ENCODE measurements at regions of chr3 and their contacts with region 1.

Region 1: DNA sequence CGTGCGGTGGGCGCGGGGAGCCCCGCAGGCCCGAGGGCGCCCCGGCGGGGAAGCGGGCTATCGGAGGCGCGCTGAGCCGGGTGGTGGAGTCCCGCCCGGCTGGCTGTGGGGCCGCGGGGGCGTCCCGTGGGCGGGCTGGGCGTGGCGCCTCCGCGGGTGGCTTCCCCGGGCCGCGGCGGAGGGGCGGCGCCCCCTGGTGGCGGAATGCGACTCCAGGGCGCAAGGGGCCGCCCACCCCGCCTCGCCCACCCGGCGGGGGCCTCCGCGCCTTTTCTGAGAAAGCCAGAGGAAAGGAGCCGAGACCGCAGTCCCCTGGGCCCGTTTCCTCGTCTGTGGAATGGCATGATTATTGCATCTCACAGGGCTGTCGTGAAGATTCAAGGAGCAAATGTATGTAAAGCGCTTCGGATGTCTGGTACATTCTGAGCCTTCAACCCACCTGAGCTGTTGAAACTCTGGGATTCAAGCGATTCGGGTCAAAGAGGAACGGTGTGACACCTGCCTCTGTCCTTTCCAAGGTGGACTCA is 31.9 kb upstream of the RAB6B start:
- DNase-seq: no peak
- H3K4me3 Mint-ChIP-seq: no peak overlapping the region
- H3K27ac Mint-ChIP-seq: no peak overlapping the region
- H3K4me1 Mint-ChIP-seq: peaks cover 13% of the 10 kb centered on the region
- H3K27me3 Mint-ChIP-seq: peaks cover 21% of the 10 kb centered on the region
- CTCF ChIP-seq: peak; percentile 71

Region 2: GRCh38 chr3:133661454-133662277 is 265.9 kb before region 1 on chr3 and contains the start of gene TOPBP1:
- CTCF ChIA-PET with region 1: interaction called, 6 read pairs
- POLR2A ChIA-PET with region 1: no interaction called
- intact Hi-C with region 1: loop called (anchors 5 kb)
- DNase-seq: peak; percentile 74
- H3K4me3 Mint-ChIP-seq: peak within 1 kb of the TSS; percentile 94
- H3K27ac Mint-ChIP-seq: peak within 1 kb of the TSS; percentile 91
- H3K4me1 Mint-ChIP-seq: peaks cover 22% of the 10 kb centered on the region
- H3K27me3 Mint-ChIP-seq: no peaks in the 10 kb centered on the region
- CTCF ChIP-seq: no peak
- total RNA-seq, gene TOPBP1: 27.4 and 27.7 TPM in 2 replicates

Region 3: GRCh38 chr3:133821767-133822638 is 105.6 kb before region 1 on chr3:
- CTCF ChIA-PET with region 1: interaction called, 18 read pairs
- POLR2A ChIA-PET with region 1: no interaction called
- intact Hi-C with region 1: loop called (anchors 2 kb)
- DNase-seq: peak; percentile 93
- H3K4me3 Mint-ChIP-seq: no peak overlapping the region
- H3K27ac Mint-ChIP-seq: no peak overlapping the region
- H3K4me1 Mint-ChIP-seq: peaks cover 13% of the 10 kb centered on the region
- H3K27me3 Mint-ChIP-seq: no peaks in the 10 kb centered on the region
- CTCF ChIP-seq: peak; percentile 26

Region 4: GRCh38 chr3:134039161-134039862 is 111.7 kb after region 1 on chr3:
- CTCF ChIA-PET with region 1: interaction called, 3 read pairs
- POLR2A ChIA-PET with region 1: no interaction called
- intact Hi-C with region 1: loop called (anchors 1 kb)
- DNase-seq: peak; percentile 52
- H3K4me3 Mint-ChIP-seq: no peak overlapping the region
- H3K27ac Mint-ChIP-seq: peak overlapping the region; percentile 46
- H3K4me1 Mint-ChIP-seq: peaks cover 13% of the 10 kb centered on the region
- H3K27me3 Mint-ChIP-seq: no peaks in the 10 kb centered on the region
- CTCF ChIP-seq: no peak

Region 5: GRCh38 chr3:134059671-134060560 is 132.3 kb after region 1 on chr3:
- CTCF ChIA-PET with region 1: interaction called, 57 read pairs
- POLR2A ChIA-PET with region 1: no interaction called
- intact Hi-C with region 1: loop called (anchors 1 kb)
- DNase-seq: peak; percentile 27
- H3K4me3 Mint-ChIP-seq: no peak overlapping the region
- H3K27ac Mint-ChIP-seq: no peak overlapping the region
- H3K4me1 Mint-ChIP-seq: peaks cover 17% of the 10 kb centered on the region
- H3K27me3 Mint-ChIP-seq: peaks cover 11% of the 10 kb centered on the region
- CTCF ChIP-seq: peak; percentile 18

Region 6: GRCh38 chr3:134161898-134162615 is 234.5 kb after region 1 on chr3:
- CTCF ChIA-PET with region 1: interaction called, 4 read pairs
- POLR2A ChIA-PET with region 1: no interaction called
- intact Hi-C with region 1: loop called (anchors 10 kb)
- DNase-seq: no peak
- H3K4me3 Mint-ChIP-seq: no peak overlapping the region
- H3K27ac Mint-ChIP-seq: no peak overlapping the region
- H3K4me1 Mint-ChIP-seq: no peaks in the 10 kb centered on the region
- H3K27me3 Mint-ChIP-seq: no peaks in the 10 kb centered on the region
- CTCF ChIP-seq: no peak

Region 7: GRCh38 chr3:134197681-134198261 is 270.2 kb after region 1 on chr3:
- CTCF ChIA-PET with region 1: interaction called, 59 read pairs
- POLR2A ChIA-PET with region 1: interaction called, 3 read pairs
- intact Hi-C with region 1: loop called (anchors 2 kb)
- DNase-seq: peak; percentile 76
- H3K4me3 Mint-ChIP-seq: no peak overlapping the region
- H3K27ac Mint-ChIP-seq: peak overlapping the region; percentile 20
- H3K4me1 Mint-ChIP-seq: peaks cover 29% of the 10 kb centered on the region
- H3K27me3 Mint-ChIP-seq: no peaks in the 10 kb centered on the region
- CTCF ChIP-seq: peak; percentile 83